CD8-positive, alpha-beta T cell (primary cell): ENCODE measurements at regions of chr17 and their contacts with region 1.

Region 1: GRCh38 chr17:76737082-76737675 is at the start of gene SRSF2:
- DNase-seq: peak; percentile 96 to 99 (median 98)
- ATAC-seq: peak; percentile 79
- H3K4me3 ChIP-seq: peak within 1 kb of the TSS; percentile 88 to 100
- H3K4me3 Mint-ChIP-seq: peak within 1 kb of the TSS; percentile 96
- H3K27ac ChIP-seq: peak within 1 kb of the TSS; percentile 93 to 99
- H3K27ac Mint-ChIP-seq: peak within 1 kb of the TSS; percentile 97
- H3K4me1 ChIP-seq: peaks cover 44% of the 10 kb centered on the region
- H3K4me1 Mint-ChIP-seq: peaks cover 59% of the 10 kb centered on the region
- H3K27me3 ChIP-seq: no peaks in the 10 kb centered on the region
- H3K27me3 Mint-ChIP-seq: no peaks in the 10 kb centered on the region
- CTCF ChIP-seq: no peak
- total RNA-seq, gene SRSF2: 621 to 637 TPM

Region 2: GRCh38 chr17:76371656-76372628 is 365.2 kb before region 1 on chr17:
- CTCF ChIA-PET with region 1: no interaction called
- POLR2A ChIA-PET with region 1: no interaction called
- intact Hi-C with region 1: no loop called
- DNase-seq: no peak
- ATAC-seq: no peak
- H3K4me3 ChIP-seq: no peak overlapping the region
- H3K4me3 Mint-ChIP-seq: no peak overlapping the region
- H3K27ac ChIP-seq: no peak overlapping the region
- H3K27ac Mint-ChIP-seq: no peak overlapping the region
- H3K4me1 ChIP-seq: no peaks in the 10 kb centered on the region
- H3K4me1 Mint-ChIP-seq: no peaks in the 10 kb centered on the region
- H3K27me3 ChIP-seq: no peaks in the 10 kb centered on the region
- H3K27me3 Mint-ChIP-seq: no peaks in the 10 kb centered on the region
- CTCF ChIP-seq: no peak

Region 3: DNA sequence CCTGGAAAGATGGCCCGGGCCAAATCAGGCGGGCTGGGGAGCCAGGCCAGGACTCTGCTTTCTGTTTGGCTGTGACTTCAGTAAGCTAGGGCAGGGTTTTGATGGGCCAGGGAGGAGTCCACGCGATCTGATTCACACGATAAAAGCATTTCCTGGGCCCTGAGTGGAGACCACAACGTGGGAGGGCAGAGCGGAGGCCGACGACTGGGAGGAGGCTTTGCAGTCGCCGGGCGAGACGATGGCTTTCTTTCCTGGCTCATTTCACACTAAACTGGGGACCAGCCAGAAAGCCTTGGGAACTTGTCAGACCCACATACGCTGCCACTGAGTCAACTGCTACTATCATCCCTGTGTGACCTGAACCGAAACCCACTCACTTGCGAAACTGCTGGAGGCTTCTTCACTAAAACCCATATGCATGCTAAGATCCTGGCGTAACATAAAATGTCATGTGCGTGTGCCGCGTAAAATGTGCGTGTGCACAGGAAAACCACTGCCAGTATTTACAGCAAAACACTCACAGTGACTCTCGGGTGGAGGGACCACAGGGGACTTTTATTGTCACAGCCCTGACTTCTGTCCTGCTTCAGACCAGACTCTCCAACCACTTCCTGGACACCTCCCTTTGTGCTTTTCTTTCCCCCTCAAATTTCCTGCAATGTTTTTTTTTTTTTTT is 221.8 kb before region 1 on chr17:
- CTCF ChIA-PET with region 1: no interaction called
- POLR2A ChIA-PET with region 1: no interaction called
- intact Hi-C with region 1: loop called in 1 of 2 experiments (anchors 1 kb)
- DNase-seq: peak; percentile 72 to 99 (median 84)
- ATAC-seq: peak; percentile 82
- H3K4me3 ChIP-seq: peak overlapping the region; percentile 32 to 44
- H3K4me3 Mint-ChIP-seq: peak overlapping the region; percentile 67
- H3K27ac ChIP-seq: peak overlapping the region; percentile 85 to 92
- H3K27ac Mint-ChIP-seq: peak overlapping the region; percentile 97
- H3K4me1 ChIP-seq: peaks cover 43% of the 10 kb centered on the region
- H3K4me1 Mint-ChIP-seq: peaks cover 49% of the 10 kb centered on the region
- H3K27me3 ChIP-seq: no peaks in the 10 kb centered on the region
- H3K27me3 Mint-ChIP-seq: no peaks in the 10 kb centered on the region
- CTCF ChIP-seq: no peak

Region 4: DNA sequence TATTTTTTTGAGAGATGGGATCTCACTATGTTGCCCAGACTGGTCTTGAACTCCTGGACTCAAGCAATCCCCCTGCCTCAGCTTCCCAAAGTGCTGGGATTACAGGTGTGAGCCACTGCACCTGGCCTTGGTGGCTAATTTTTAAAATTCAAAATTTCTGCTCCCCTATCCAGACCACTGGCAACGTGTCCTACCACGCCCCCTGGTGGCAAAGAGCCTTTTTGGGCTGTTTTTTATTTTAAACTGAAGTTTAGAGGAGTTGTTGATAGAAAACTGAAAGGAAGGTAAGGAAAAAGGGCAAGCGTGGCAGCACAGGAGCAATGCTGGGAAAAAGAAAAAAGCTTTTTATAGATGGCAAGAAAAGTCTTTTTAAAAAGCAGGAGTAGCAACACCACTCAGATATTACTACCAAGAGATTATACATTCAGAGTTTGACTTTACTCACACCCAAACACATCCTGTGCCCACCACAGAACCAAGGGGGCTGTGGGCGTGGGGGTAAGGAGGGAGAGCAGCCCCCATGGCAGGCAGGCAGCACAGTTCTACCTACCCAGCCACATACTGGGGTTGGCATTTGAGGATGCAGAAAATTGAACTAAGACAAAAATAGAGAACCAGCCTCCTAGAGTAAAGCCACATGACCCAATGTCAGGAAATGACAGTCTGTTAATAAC is 22.2 kb before region 1 on chr17:
- CTCF ChIA-PET with region 1: interaction called, 23 read pairs
- POLR2A ChIA-PET with region 1: interaction called, 7 read pairs
- intact Hi-C with region 1: loop called (anchors 1 kb)
- DNase-seq: peak; percentile 57 to 88 (median 76)
- ATAC-seq: peak; percentile 5
- H3K4me3 ChIP-seq: peak overlapping the region in 1 of 2 experiments; percentile 4
- H3K4me3 Mint-ChIP-seq: peak overlapping the region; percentile 55
- H3K27ac ChIP-seq: peak overlapping the region; percentile 71 to 83
- H3K27ac Mint-ChIP-seq: peak overlapping the region; percentile 97
- H3K4me1 ChIP-seq: peaks cover 54% of the 10 kb centered on the region
- H3K4me1 Mint-ChIP-seq: peaks cover 57% of the 10 kb centered on the region
- H3K27me3 ChIP-seq: no peaks in the 10 kb centered on the region
- H3K27me3 Mint-ChIP-seq: no peaks in the 10 kb centered on the region
- CTCF ChIP-seq: peak; percentile 95

Region 5: GRCh38 chr17:76772842-76773525 is 35.8 kb after region 1 on chr17:
- CTCF ChIA-PET with region 1: no interaction called
- POLR2A ChIA-PET with region 1: interaction called, 6 read pairs
- intact Hi-C with region 1: loop called (anchors 1 kb)
- DNase-seq: peak in 8 of 9 experiments; percentile 32 to 89 (median 62)
- ATAC-seq: peak; percentile 88
- H3K4me3 ChIP-seq: peak overlapping the region; percentile 30 to 39
- H3K4me3 Mint-ChIP-seq: peak overlapping the region; percentile 70
- H3K27ac ChIP-seq: peak overlapping the region; percentile 60 to 87
- H3K27ac Mint-ChIP-seq: peak overlapping the region; percentile 97
- H3K4me1 ChIP-seq: peaks cover 11% of the 10 kb centered on the region
- H3K4me1 Mint-ChIP-seq: peaks cover 20% of the 10 kb centered on the region
- H3K27me3 ChIP-seq: no peaks in the 10 kb centered on the region
- H3K27me3 Mint-ChIP-seq: no peaks in the 10 kb centered on the region
- CTCF ChIP-seq: no peak

Region 6: DNA sequence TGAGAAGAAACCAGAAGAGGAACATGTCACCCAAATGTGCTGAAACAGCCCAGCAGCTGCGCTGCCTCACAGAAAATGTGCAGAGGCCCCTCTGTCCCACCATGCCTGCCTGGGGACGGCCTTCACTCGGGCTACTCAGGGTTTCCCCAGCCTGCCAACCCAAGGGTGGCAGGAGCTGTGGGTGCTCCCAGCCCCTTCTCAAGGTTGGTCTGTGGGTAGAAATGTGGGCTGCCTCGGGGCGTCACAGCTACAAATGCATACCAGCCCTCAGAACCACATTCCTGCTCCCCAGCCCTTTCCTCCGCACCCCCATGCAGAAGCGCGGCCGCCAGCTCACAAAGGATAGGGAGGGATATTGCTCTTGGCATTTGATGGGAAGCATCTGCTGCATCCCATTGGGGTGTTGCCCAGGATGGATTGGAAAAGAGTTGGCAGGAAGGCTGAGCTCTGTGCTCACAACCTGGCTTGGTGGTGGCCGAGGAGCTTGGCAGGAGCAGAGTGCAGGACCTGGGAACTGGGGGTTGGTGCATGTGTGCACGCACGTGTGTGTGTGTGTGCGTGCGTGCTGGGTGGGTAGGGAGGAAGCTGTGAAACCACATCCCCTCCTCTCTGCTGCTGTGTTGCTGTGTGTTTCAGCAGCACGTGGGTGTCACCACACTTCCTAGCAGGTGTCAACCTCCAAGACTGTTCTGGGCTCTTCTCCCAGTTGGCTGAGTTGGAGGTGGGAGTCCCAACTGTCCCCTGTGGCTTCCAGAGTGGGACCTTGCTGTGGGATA is 708.0 kb after region 1 on chr17:
- CTCF ChIA-PET with region 1: no interaction called
- POLR2A ChIA-PET with region 1: no interaction called
- intact Hi-C with region 1: loop called (anchors 10 kb)
- DNase-seq: peak; percentile 75 to 99 (median 85)
- ATAC-seq: peak; percentile 62
- H3K4me3 ChIP-seq: peak overlapping the region; percentile 32 to 38
- H3K4me3 Mint-ChIP-seq: peak overlapping the region; percentile 82
- H3K27ac ChIP-seq: peak overlapping the region; percentile 64 to 72
- H3K27ac Mint-ChIP-seq: peak overlapping the region; percentile 97
- H3K4me1 ChIP-seq: peaks cover 92% of the 10 kb centered on the region
- H3K4me1 Mint-ChIP-seq: peaks cover 90% of the 10 kb centered on the region
- H3K27me3 ChIP-seq: no peaks in the 10 kb centered on the region
- H3K27me3 Mint-ChIP-seq: no peaks in the 10 kb centered on the region
- CTCF ChIP-seq: no peak

Region 7: DNA sequence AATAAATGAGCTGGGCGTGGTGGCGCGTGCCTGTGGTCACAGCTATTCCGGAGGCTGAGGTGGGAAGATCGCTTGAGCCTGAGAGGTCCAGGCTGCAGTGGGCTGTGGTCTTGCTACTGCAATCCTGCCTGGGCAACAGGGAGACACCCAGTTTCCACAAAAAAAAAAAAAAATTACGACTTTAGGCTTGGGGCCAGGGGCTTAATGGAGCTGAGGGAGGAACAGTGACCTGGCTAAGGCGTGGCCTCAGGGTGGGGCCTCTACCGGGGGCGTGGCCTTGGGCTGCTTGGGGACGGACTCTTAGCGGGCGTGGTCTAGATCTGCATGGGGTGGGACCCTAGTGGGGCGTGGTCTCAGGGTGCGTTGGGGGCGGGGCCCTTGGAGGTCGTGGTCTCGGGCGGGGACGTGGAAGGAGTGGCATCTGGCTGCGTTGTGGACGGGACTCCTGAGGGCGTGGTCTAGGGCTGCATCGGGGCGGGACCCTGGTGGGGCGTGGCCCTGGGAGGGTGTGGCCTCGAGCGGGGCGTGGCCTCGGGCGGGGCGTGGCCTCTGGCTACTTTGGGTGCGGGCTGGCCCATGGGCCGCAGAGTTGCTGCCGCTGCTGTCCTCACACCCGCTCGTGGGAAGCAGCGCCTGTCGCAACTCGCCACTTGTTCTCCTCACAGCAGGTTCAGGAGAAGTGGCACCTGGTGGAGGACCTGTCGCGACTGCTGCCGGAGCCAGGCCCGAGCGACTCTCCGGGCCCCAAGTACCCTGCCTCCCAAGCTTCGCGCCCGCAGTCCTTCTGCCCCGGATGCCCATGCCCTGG is 1403.2 kb after region 1 on chr17:
- CTCF ChIA-PET with region 1: no interaction called
- POLR2A ChIA-PET with region 1: no interaction called
- intact Hi-C with region 1: loop called (anchors 5 to 10 kb)
- DNase-seq: peak; percentile 83 to 96 (median 93)
- ATAC-seq: peak; percentile 88
- H3K4me3 ChIP-seq: peak overlapping the region in 1 of 2 experiments; percentile 20
- H3K4me3 Mint-ChIP-seq: peak overlapping the region; percentile 61
- H3K27ac ChIP-seq: peak overlapping the region; percentile 16 to 51
- H3K27ac Mint-ChIP-seq: peak overlapping the region; percentile 91
- H3K4me1 ChIP-seq: peaks cover 81% of the 10 kb centered on the region
- H3K4me1 Mint-ChIP-seq: peaks cover 70% of the 10 kb centered on the region
- H3K27me3 ChIP-seq: no peaks in the 10 kb centered on the region
- H3K27me3 Mint-ChIP-seq: no peaks in the 10 kb centered on the region
- CTCF ChIP-seq: no peak